ENCODE measurements at regions of chr6 and their contacts with region 1.

Region 1: GRCh38 chr6:3068329-3069214 is at the start of gene RIPK1:
- DNase-seq: peak; percentile 70 to 93
- H3K4me3 ChIP-seq: peak within 1 kb of the TSS; percentile 89
- H3K27ac ChIP-seq: peak within 1 kb of the TSS; percentile 83
- H3K4me1 ChIP-seq: peaks cover 11% of the 10 kb centered on the region
- H3K27me3 ChIP-seq: no peaks in the 10 kb centered on the region
- CTCF ChIP-seq: no peak
- total RNA-seq, gene RIPK1: 13.9 and 14.8 TPM in 2 replicates

Region 2: GRCh38 chr6:2853761-2854395 is 214.7 kb before region 1 on chr6:
- CTCF ChIA-PET with region 1: no interaction called
- POLR2A ChIA-PET with region 1: interaction called, 4 read pairs
- intact Hi-C with region 1: loop called (anchors 5 kb)
- DNase-seq: peak; percentile 82 to 87
- H3K4me3 ChIP-seq: peak overlapping the region; percentile 60
- H3K27ac ChIP-seq: peak overlapping the region; percentile 99
- H3K4me1 ChIP-seq: peaks cover 24% of the 10 kb centered on the region
- H3K27me3 ChIP-seq: no peaks in the 10 kb centered on the region
- CTCF ChIP-seq: peak; percentile 58

Region 3: GRCh38 chr6:3052481-3053230 is 15.9 kb before region 1 on chr6:
- CTCF ChIA-PET with region 1: interaction called, 10 read pairs
- POLR2A ChIA-PET with region 1: interaction called, 12 read pairs
- intact Hi-C with region 1: no loop called
- DNase-seq: no peak
- H3K4me3 ChIP-seq: no peak overlapping the region
- H3K27ac ChIP-seq: no peak overlapping the region
- H3K4me1 ChIP-seq: no peaks in the 10 kb centered on the region
- H3K27me3 ChIP-seq: no peaks in the 10 kb centered on the region
- CTCF ChIP-seq: no peak

Region 4: GRCh38 chr6:3118353-3119039 is 49.9 kb after region 1 on chr6 and contains the start of gene BPHL:
- CTCF ChIA-PET with region 1: no interaction called
- POLR2A ChIA-PET with region 1: interaction called, 4 read pairs
- intact Hi-C with region 1: loop called (anchors 5 kb)
- DNase-seq: peak; percentile 71 to 98
- H3K4me3 ChIP-seq: peak within 1 kb of the TSS; percentile 84
- H3K27ac ChIP-seq: peak within 1 kb of the TSS; percentile 97
- H3K4me1 ChIP-seq: peaks cover 22% of the 10 kb centered on the region
- H3K27me3 ChIP-seq: no peaks in the 10 kb centered on the region
- CTCF ChIP-seq: no peak
- total RNA-seq, gene BPHL: 23.7 and 24.5 TPM in 2 replicates

Region 5: GRCh38 chr6:3258720-3259490 is 190.3 kb after region 1 on chr6 and contains the start of gene PSMG4:
- CTCF ChIA-PET with region 1: no interaction called
- POLR2A ChIA-PET with region 1: no interaction called
- intact Hi-C with region 1: loop called (anchors 2 kb)
- DNase-seq: peak; percentile 41 to 93
- H3K4me3 ChIP-seq: peak within 1 kb of the TSS; percentile 81
- H3K27ac ChIP-seq: peak within 1 kb of the TSS; percentile 23
- H3K4me1 ChIP-seq: 0 out of 2 replicates have a peak, but pooled peaks cover 5% of the 10 kb centered on the region
- H3K27me3 ChIP-seq: no peaks in the 10 kb centered on the region
- CTCF ChIP-seq: no peak
- total RNA-seq, gene PSMG4: 33.8 and 47.6 TPM in 2 replicates

Region 6: GRCh38 chr6:3489027-3489757 is 420.6 kb after region 1 on chr6:
- CTCF ChIA-PET with region 1: no interaction called
- POLR2A ChIA-PET with region 1: no interaction called
- intact Hi-C with region 1: no loop called
- DNase-seq: peak in 1 of 2 experiments; percentile 47
- H3K4me3 ChIP-seq: no peak overlapping the region
- H3K27ac ChIP-seq: no peak overlapping the region
- H3K4me1 ChIP-seq: no peaks in the 10 kb centered on the region
- H3K27me3 ChIP-seq: peaks cover 5% of the 10 kb centered on the region; the same call in 1 of the 2 replicates
- CTCF ChIP-seq: no peak

Measured in PC-9 (cell line).